ENCODE measurements at regions of chr10 and their contacts with region 1.

Region 1: DNA sequence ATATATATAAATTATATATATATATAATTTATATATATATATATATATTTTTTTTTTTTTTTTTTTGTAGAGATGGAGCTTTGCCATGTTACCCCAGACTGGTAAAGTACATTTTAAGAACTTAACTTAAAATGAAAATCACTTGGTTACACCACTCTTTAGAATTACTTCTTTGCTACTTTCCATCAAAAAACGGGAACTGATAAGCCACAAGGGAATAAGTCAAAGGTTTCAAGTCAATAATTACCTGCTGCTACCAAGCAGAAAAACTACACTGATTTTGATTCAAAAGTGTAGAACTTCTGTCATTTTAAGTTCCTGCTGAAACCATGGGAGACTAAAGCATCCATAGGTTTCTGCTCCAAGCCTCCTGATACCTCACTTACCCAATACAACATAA is 12.2 kb downstream of the PPA1 start:
- DNase-seq: no peak
- H3K4me3 ChIP-seq: no peak overlapping the region
- H3K27ac ChIP-seq: no peak overlapping the region
- H3K4me1 ChIP-seq: peaks cover 6% of the 10 kb centered on the region
- H3K27me3 ChIP-seq: no peaks in the 10 kb centered on the region
- CTCF ChIP-seq: no peak
- POLR2A ChIP-seq: no peak

Region 2: DNA sequence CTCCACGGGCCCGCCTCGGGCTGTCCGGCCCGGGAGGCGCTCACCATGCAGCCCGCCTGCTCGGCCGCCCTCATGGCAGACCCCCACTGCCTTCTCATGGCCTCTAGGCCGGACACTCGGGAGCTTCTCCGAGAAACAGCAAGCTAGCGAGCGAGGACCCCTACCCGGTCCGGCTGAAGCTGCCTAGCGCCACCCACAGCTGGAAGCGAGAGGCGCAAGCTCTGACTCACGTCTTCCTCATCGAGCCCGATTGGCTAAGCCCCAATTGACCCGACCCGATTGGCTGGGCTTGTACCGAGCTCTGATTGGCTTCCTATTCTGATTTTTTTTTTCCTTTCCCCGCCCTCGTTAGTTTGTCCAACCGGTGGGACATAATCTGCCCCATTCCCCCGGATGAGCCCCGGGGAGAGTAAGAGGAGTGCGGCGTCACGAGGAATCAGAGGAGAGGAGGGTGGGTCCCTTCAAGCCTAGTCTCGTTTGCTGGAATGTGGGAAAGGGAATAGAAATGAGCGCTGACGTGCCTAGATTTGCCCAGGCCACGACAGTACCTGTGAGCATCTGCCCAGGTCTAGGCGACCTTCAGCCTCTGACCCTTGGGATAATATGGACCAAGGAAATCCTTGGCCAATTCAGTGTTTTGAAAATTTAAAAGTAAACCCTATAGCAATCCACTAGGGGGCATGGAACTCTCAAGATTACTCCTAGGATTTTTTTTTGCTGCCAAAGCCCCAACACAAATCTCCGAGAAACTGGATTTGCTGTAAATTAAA is 74.4 kb before region 1 on chr10 and contains the start of gene TYSND1:
- CTCF ChIA-PET with region 1: interaction called, 21 read pairs
- POLR2A ChIA-PET with region 1: no interaction called
- dilution Hi-C with region 1: no loop called
- intact Hi-C with region 1: no loop called
- DNase-seq: peak; percentile 98
- H3K4me3 ChIP-seq: peak within 1 kb of the TSS; percentile 58 to 64 (median 64)
- H3K27ac ChIP-seq: peak within 1 kb of the TSS; percentile 45
- H3K4me1 ChIP-seq: peaks cover 11% of the 10 kb centered on the region
- H3K27me3 ChIP-seq: no peaks in the 10 kb centered on the region
- CTCF ChIP-seq: peak; percentile 66 to 87
- POLR2A ChIP-seq: peak; percentile 91
- total RNA-seq, gene TYSND1: 6.7 and 7.8 TPM in 2 replicates

Region 3: GRCh38 chr10:70267161-70267933 is 46.3 kb after region 1 on chr10:
- CTCF ChIA-PET with region 1: interaction called, 22 read pairs
- POLR2A ChIA-PET with region 1: no interaction called
- dilution Hi-C with region 1: no loop called
- intact Hi-C with region 1: no loop called
- DNase-seq: peak; percentile 25
- H3K4me3 ChIP-seq: no peak overlapping the region
- H3K27ac ChIP-seq: no peak overlapping the region
- H3K4me1 ChIP-seq: peaks cover 2% of the 10 kb centered on the region
- H3K27me3 ChIP-seq: peaks cover 13% of the 10 kb centered on the region in 2 experiments
- CTCF ChIP-seq: peak; percentile 16 to 26
- POLR2A ChIP-seq: no peak

Region 4: GRCh38 chr10:70355051-70356021 is 134.3 kb after region 1 on chr10:
- CTCF ChIA-PET with region 1: interaction called, 498 read pairs
- POLR2A ChIA-PET with region 1: no interaction called
- dilution Hi-C with region 1: no loop called
- intact Hi-C with region 1: no loop called
- DNase-seq: no peak
- H3K4me3 ChIP-seq: no peak overlapping the region
- H3K27ac ChIP-seq: no peak overlapping the region
- H3K4me1 ChIP-seq: no peaks in the 10 kb centered on the region
- H3K27me3 ChIP-seq: no peaks in the 10 kb centered on the region
- CTCF ChIP-seq: no peak
- POLR2A ChIP-seq: no peak

Region 5: DNA sequence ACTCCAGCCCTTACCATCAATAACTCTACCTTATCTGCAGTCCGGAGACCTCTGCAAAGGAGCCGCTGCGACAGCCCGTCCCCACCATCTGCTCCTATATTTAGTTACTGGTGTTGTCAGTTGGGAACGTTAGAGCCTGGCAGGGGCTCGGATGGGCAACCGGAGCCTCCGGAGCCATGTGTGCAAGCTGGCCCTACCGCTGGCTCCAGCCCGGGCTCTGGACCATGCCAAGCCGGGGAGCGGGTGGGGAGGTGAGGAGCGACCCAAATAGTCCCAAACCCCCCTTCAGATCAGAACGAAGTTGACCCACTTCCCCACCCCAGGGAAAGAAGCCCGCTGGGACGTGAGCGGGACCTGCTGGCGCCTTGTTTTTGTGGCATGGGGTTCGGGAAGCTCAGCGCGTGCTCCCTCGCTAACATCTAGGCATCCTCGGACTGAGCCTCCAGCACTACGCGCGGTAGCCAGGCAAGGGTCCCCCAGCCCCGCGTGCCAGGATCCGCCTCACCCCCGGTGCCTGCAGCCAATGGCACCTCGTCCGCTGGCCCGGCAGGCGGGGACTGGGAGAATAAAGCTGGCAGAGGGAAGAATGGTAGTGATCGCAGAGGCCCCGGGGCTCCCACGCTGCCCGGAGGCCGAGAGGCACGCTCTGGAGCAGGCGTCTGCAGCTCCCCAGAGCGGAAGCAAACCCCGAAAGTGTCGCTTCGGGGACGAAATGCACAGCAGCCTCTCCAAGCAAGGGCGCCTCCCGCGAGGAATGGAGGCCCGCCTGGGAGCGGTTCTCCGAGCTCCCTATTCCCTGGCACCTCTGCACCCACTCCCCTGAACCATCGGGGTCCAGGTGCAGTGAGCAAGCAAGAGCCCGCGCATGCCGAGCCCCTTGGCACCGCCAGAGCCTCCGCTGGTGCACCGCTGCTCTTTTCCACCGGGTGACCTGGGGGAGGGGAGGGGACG is 160.7 kb after region 1 on chr10:
- CTCF ChIA-PET with region 1: interaction called, 89 read pairs
- POLR2A ChIA-PET with region 1: interaction called, 3 read pairs
- dilution Hi-C with region 1: no loop called
- intact Hi-C with region 1: no loop called
- DNase-seq: peak; percentile 55
- H3K4me3 ChIP-seq: peak overlapping the region; percentile 51 to 88 (median 82)
- H3K27ac ChIP-seq: peak overlapping the region; percentile 41
- H3K4me1 ChIP-seq: peaks cover 32% of the 10 kb centered on the region
- H3K27me3 ChIP-seq: peaks cover 0 to 3% of the 10 kb centered on the region in 2 experiments
- CTCF ChIP-seq: no peak
- POLR2A ChIP-seq: peak; percentile 57

Region 6: DNA sequence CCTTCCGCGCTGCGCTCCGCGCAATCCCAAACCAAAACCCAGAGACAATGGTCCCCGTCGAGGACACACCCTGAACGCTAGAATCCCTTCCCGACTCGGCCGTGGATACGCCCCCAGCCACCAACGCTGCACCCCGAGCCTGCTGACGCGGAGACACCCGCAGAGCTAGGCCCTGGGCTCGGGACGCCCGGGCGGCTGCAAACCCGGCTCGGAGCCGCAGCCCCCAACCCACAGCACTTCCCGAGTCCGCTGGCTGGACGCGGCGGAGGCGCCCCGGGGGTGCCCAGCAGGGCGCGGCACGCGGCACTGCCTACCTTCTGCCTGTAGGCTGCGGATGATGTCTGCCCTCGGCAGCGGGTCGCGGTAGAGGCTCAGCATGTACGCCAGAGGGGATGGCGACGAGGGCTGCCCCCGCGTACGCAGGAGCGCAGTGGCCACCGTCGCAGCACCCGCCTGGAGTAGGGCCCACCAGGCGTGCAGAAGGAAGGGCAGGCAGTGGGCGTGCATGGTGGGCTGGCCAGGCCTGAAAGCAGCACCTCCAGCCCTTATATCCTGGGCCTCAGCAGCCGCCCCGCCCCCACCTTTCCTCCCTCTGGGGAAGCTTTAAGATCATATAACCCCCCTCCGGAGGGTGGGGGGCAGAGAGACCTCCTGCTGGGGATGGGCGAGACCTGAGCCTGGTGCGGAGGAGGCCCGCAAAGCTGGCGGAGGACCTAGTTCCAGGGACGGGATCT is 220.3 kb after region 1 on chr10 and contains the start of gene NODAL:
- CTCF ChIA-PET with region 1: interaction called, 12 read pairs
- POLR2A ChIA-PET with region 1: no interaction called
- dilution Hi-C with region 1: no loop called
- intact Hi-C with region 1: no loop called
- DNase-seq: no peak
- H3K4me3 ChIP-seq: no peak within 1 kb of the TSS
- H3K27ac ChIP-seq: no peak within 1 kb of the TSS
- H3K4me1 ChIP-seq: no peaks in the 10 kb centered on the region
- H3K27me3 ChIP-seq: peaks cover 38 to 50% of the 10 kb centered on the region in 2 experiments
- CTCF ChIP-seq: no peak
- POLR2A ChIP-seq: no peak
- total RNA-seq, gene NODAL: not detected in 2 replicates

Region 7: GRCh38 chr10:70758757-70759514 is 537.9 kb after region 1 on chr10:
- CTCF ChIA-PET with region 1: interaction called, 10 read pairs
- POLR2A ChIA-PET with region 1: no interaction called
- dilution Hi-C with region 1: no loop called
- intact Hi-C with region 1: no loop called
- DNase-seq: peak; percentile 52
- H3K4me3 ChIP-seq: no peak overlapping the region
- H3K27ac ChIP-seq: no peak overlapping the region
- H3K4me1 ChIP-seq: no peaks in the 10 kb centered on the region
- H3K27me3 ChIP-seq: peaks cover 0 to 6% of the 10 kb centered on the region in 2 experiments
- CTCF ChIP-seq: peak; percentile 71 to 74
- POLR2A ChIP-seq: no peak

Measured in endothelial cell of umbilical vein (primary cell).